GM13976 (cell line): ENCODE measurements at regions of chrX and their contacts with region 1.

Region 1: GRCh38 chrX:109485470-109486340 is 3.8 kb upstream of the GUCY2F start:
- DNase-seq: peak; percentile 12
- CTCF ChIP-seq: peak; percentile 92

Region 2: GRCh38 chrX:109624641-109625616 is 139.2 kb after region 1 on chrX and contains the start of gene KCNE5:
- in situ Hi-C with region 1: loop called (anchors 10 kb)
- DNase-seq: no peak
- CTCF ChIP-seq: no peak

Region 3: DNA sequence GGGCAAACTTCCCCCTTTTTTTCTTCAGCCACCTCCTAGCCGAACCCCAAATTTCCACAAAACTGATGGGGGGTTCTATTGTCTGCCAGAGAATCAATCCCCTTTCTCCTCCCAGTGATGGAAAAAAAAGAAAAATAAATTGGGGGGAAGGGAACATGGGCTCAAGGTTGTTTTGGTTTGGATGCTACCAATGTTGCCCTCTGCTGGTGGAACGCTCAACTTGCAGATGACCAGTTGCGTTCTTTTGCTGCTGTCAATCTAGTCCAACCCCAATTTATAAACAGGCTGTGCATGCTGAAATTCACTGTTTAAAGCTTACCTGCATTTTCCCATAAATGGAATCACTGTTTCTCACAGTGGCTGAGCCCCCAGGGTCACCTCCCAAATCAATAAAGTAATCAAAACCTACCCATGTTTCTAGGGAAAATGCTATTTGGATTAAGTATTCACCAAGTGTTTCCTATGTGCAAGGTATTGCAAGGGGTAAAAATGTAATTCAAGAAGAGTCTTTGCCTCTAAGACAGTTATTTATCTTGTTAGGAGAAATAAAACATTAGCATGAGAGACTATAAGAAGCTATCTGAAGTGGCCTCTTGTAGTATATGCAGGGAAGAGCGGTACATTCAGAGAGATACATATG is 400.5 kb after region 1 on chrX:
- in situ Hi-C with region 1: loop called (anchors 10 kb)
- DNase-seq: peak; percentile 46
- CTCF ChIP-seq: peak; percentile 77

Region 4: GRCh38 chrX:109934434-109934833 is 448.7 kb after region 1 on chrX:
- in situ Hi-C with region 1: no loop called
- DNase-seq: no peak
- CTCF ChIP-seq: no peak